PC-9 (cell line): ENCODE measurements at regions of chr14 and their contacts with region 1.

Region 1: GRCh38 chr14:75864352-75864751 is 117.4 kb downstream of the TGFB3 start:
- DNase-seq: peak in 1 of 2 experiments; percentile 93
- H3K4me3 ChIP-seq: no peak overlapping the region
- H3K27ac ChIP-seq: peak overlapping the region; percentile 33
- H3K4me1 ChIP-seq: peaks cover 66% of the 10 kb centered on the region
- H3K27me3 ChIP-seq: no peaks in the 10 kb centered on the region
- CTCF ChIP-seq: no peak

Region 2: GRCh38 chr14:75335571-75335970 is 528.8 kb before region 1 on chr14:
- CTCF ChIA-PET with region 1: no interaction called
- POLR2A ChIA-PET with region 1: interaction called, 32 read pairs
- intact Hi-C with region 1: no loop called
- DNase-seq: no peak
- H3K4me3 ChIP-seq: no peak overlapping the region
- H3K27ac ChIP-seq: no peak overlapping the region
- H3K4me1 ChIP-seq: no peaks in the 10 kb centered on the region
- H3K27me3 ChIP-seq: no peaks in the 10 kb centered on the region
- CTCF ChIP-seq: no peak

Region 3: GRCh38 chr14:76022991-76023390 is 158.6 kb after region 1 on chr14:
- CTCF ChIA-PET with region 1: no interaction called
- POLR2A ChIA-PET with region 1: no interaction called
- intact Hi-C with region 1: no loop called
- DNase-seq: no peak
- H3K4me3 ChIP-seq: no peak overlapping the region
- H3K27ac ChIP-seq: no peak overlapping the region
- H3K4me1 ChIP-seq: no peaks in the 10 kb centered on the region
- H3K27me3 ChIP-seq: no peaks in the 10 kb centered on the region
- CTCF ChIP-seq: no peak